ENCODE measurements at regions of chr9 and their contacts with region 1.

Region 1: DNA sequence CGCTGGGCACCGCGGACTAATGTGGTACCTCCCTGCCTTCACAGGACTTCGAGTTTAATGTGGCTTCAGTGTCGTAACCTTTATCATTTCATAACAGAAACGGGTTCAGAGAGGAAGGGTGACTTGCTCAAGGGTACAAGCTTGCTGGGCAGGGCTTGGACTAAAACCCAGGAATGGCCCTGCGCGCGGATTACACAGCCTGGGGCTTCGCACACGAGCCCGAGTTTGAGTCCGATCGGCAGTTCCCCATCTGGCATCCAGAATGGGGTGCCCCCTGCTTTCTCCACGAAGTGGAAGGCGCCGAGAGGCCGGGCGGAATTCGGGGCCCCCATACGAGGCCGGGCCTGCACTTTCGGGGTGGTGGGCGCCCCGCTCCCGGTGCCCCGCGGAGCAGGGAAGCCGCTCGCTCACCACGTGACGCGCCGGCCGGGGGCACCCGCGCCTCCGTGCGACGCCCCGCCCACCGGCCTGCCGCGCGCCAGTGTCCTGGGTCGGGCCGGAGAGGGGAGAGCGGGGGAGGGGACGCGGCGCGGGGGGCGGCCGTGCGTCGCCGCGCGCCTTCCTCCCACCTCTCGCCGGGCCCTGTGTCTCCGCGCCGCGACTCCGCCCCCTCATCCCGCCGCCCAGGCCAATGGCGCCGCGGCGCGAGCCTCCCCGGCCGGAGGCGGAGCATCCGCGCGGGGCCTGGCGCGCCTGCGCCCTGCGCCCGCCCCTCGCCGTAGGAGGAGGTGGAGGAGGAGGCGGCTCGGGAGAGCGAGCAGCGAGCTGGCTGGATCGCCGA is at the start of gene SET:
- DNase-seq: peak; percentile 98
- H3K4me3 ChIP-seq: peak within 1 kb of the TSS; percentile 93
- H3K27ac ChIP-seq: peak within 1 kb of the TSS; percentile 95
- H3K4me1 ChIP-seq: peaks cover 29% of the 10 kb centered on the region
- H3K27me3 ChIP-seq: no peaks in the 10 kb centered on the region
- CTCF ChIP-seq: no peak
- total RNA-seq, gene SET: 942 and 1,009 TPM in 2 replicates

Region 2: GRCh38 chr9:128552153-128552743 is 136.5 kb before region 1 on chr9 and contains the start of gene SPTAN1:
- CTCF ChIA-PET with region 1: no interaction called
- POLR2A ChIA-PET with region 1: no interaction called
- intact Hi-C with region 1: loop called (anchors 5 kb)
- DNase-seq: peak; percentile 93
- H3K4me3 ChIP-seq: peak within 1 kb of the TSS; percentile 95
- H3K27ac ChIP-seq: peak within 1 kb of the TSS; percentile 85
- H3K4me1 ChIP-seq: peaks cover 52% of the 10 kb centered on the region
- H3K27me3 ChIP-seq: no peaks in the 10 kb centered on the region
- CTCF ChIP-seq: no peak
- total RNA-seq, gene SPTAN1: 239 and 262 TPM in 2 replicates

Measured in A673 (cell line).